ENCODE measurements at regions of chr16 and their contacts with region 1.

Region 1: DNA sequence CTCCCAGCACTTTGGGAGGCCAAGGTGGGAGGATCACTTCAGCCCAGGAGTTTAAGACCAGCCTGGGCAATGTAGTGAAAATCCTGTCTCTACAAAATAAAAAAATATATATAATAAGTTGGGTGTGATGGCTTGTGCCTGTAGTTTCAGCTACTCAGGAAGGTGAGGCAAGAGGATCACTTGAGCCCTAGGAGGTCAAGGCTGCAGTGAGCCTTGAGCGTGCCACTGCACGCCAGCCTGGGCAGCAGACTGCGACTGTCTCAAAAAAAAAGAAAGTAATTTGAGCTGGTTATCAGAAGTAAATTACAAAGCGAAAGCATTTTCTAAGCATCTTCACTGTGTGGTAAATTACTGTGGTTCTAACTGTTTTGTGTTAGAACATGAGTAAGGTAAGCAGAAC is 66.2 kb downstream of the NQO1 start:
- DNase-seq: no peak
- ATAC-seq: no peak
- H3K4me3 ChIP-seq: no peak overlapping the region
- H3K4me3 Mint-ChIP-seq: no peak overlapping the region
- H3K27ac ChIP-seq: no peak overlapping the region
- H3K27ac Mint-ChIP-seq: no peak overlapping the region
- H3K4me1 ChIP-seq: no peaks in the 10 kb centered on the region
- H3K4me1 Mint-ChIP-seq: no peaks in the 10 kb centered on the region
- H3K27me3 ChIP-seq: no peaks in the 10 kb centered on the region
- H3K27me3 Mint-ChIP-seq: no peaks in the 10 kb centered on the region
- CTCF ChIP-seq: no peak

Region 2: DNA sequence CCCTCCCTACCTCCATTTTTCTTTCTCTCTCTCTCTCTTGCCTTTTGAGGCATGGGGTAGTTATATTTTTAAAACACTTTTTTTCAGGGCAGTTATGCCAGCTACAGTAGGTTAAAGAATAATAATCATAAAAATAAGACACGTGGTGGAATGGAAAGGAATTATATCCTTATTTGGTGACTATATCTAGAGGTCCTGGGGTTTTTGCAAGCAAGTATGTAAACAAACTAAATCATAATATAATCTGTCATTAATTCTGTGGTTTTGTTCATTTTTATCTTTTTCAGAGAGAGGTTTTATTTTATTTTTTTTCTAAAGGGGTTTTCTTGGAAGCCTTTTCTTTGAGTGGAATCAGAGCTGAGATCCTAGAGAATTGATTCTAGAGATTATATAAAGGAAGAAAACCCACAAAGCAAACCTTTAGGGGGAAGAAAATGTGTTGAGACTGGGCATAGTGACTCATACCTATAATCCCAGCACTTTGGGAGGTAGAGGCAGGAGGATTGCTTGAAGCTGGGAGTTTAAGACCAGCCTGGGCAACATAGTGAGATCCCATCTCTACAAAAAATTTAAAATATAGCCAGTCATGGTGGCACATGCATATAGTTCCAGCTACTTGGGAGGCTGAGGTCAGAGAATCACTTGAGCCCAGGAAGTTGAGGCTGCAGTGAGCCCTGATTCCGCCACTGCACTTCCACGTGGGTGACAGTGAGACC is 13.0 kb after region 1 on chr16:
- CTCF ChIA-PET with region 1: interaction called, 3 read pairs
- POLR2A ChIA-PET with region 1: no interaction called
- intact Hi-C with region 1: loop called (anchors 2 kb)
- DNase-seq: no peak
- ATAC-seq: no peak
- H3K4me3 ChIP-seq: no peak overlapping the region
- H3K4me3 Mint-ChIP-seq: no peak overlapping the region
- H3K27ac ChIP-seq: no peak overlapping the region
- H3K27ac Mint-ChIP-seq: no peak overlapping the region
- H3K4me1 ChIP-seq: no peaks in the 10 kb centered on the region
- H3K4me1 Mint-ChIP-seq: no peaks in the 10 kb centered on the region
- H3K27me3 ChIP-seq: no peaks in the 10 kb centered on the region
- H3K27me3 Mint-ChIP-seq: no peaks in the 10 kb centered on the region
- CTCF ChIP-seq: no peak

Measured in B cell (primary cell).